PC-3 (cell line): ENCODE measurements at regions of chr3 and their contacts with region 1.

Region 1: DNA sequence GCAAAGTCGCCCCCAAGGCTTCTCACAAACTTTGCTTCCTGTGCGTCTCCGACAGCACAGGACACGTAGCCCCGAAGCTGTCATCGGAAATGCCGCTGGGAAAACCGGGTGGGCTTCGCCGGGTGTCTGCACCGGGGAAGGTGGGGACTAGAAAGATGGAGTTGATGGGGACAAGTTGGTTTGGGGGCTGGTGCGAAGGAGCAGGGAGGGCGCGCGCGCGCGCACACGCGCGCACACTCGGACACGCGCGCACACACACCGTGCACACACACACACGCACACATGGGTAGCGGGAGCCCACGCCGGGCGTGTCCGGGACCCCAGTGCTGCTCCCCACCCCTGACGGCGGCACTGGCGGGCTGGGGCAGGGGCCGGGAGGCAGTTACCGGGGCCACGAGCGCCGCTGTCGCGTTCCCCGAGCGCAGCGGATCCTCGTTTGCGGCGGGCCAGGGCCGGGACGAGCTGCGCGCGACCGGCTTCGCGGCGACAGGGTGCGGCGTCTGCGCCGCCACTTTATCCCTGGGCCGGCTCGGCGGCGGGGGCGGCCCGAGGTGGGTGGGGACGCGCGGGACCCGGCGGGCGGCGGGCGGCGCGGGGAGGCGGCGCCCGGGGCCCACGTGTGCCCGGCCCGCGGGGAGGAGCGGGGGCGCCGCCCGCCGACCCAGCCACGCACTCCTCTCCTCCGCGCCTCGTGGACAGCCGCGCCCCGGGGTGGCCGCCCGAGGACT is 547 bp upstream of the MGLL start:
- DNase-seq: peak; percentile 29
- ATAC-seq: peak; percentile 51
- H3K4me3 ChIP-seq: peak overlapping the region; percentile 80
- H3K27ac ChIP-seq: peak overlapping the region; percentile 76
- H3K4me1 ChIP-seq: peaks cover 50% of the 10 kb centered on the region
- H3K27me3 ChIP-seq: no peaks in the 10 kb centered on the region
- CTCF ChIP-seq: no peak

Region 2: DNA sequence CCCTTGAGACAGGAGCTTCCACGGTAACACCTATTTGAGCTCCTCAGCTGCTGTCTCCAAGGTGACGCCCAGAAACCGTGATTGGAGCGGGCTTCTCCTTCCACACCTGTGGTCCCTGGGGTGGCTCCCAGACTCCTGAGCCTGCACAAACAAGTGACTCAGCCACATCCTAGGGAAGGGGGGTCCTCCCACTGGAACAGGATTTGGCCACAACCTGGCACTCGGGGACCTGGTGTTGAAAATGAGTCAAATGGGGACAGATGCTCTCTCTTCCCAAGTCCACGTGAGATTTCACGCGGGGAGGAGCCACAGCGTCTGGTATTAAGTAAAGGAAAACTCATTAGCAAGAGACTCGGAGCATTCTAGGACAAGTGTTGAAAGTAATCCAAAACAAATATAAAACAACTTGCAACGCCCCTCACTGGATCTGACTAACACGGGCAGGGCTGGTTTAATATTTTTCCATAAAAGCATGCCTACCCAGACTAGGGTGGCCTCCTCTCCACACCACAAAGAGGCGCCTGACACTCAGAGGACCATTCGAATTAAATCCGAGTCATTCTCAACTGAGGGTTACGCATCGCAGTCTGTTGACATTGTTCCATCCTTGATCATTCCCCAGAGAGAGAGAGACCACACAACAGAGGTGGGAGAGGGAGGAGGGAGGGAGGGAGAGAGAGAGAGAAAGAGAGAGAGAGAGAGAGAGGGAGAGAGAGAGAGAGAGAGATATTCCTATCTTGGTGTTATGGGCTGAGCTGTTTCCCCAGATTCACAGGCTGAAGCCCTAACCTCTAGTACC is 74.9 kb before region 1 on chr3:
- CTCF ChIA-PET with region 1: interaction called, 3 read pairs
- POLR2A ChIA-PET with region 1: interaction called, 3 read pairs
- intact Hi-C with region 1: loop called (anchors 5 kb)
- DNase-seq: peak; percentile 92
- ATAC-seq: peak; percentile 73
- H3K4me3 ChIP-seq: peak overlapping the region; percentile 33; the same call in 1 of the 2 replicates
- H3K27ac ChIP-seq: peak overlapping the region; percentile 95
- H3K4me1 ChIP-seq: peaks cover 58% of the 10 kb centered on the region
- H3K27me3 ChIP-seq: no peaks in the 10 kb centered on the region
- CTCF ChIP-seq: peak; percentile 43

Region 3: DNA sequence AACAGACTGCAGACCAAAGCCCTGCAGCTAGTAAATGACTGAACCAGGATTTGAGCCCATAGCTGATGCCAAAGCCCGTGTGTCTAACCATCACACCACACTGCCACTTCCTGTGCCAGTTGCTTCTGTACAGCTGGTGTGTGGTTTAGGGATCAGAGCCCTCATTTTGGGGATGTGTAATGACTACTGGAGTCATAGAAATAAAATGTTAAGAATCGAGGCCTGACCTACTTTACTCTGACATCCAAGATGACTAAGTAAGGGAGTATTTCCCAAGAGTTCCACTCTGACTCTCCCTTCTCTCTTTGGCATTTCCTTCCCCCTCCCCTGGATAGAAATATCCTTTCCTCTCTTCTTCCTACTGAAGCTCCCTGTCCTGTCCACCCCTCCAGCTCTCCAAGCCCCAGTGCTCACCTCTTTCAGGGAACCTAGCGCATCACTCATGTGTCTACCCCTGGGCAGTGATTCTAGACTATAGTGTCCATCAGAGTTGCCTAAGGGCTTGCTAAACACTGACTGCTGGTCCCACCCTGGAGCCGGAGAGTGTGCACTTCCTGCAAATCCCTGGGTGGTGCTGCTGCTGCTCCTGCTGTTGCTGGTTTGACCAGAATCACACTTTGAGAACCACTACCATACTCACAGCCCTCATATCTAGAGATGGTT is 54.4 kb before region 1 on chr3:
- CTCF ChIA-PET with region 1: no interaction called
- POLR2A ChIA-PET with region 1: interaction called, 14 read pairs
- intact Hi-C with region 1: loop called (anchors 1 kb)
- DNase-seq: peak; percentile 95
- ATAC-seq: peak; percentile 91
- H3K4me3 ChIP-seq: no peak overlapping the region
- H3K27ac ChIP-seq: peak overlapping the region; percentile 88
- H3K4me1 ChIP-seq: peaks cover 28% of the 10 kb centered on the region
- H3K27me3 ChIP-seq: no peaks in the 10 kb centered on the region
- CTCF ChIP-seq: no peak

Region 4: DNA sequence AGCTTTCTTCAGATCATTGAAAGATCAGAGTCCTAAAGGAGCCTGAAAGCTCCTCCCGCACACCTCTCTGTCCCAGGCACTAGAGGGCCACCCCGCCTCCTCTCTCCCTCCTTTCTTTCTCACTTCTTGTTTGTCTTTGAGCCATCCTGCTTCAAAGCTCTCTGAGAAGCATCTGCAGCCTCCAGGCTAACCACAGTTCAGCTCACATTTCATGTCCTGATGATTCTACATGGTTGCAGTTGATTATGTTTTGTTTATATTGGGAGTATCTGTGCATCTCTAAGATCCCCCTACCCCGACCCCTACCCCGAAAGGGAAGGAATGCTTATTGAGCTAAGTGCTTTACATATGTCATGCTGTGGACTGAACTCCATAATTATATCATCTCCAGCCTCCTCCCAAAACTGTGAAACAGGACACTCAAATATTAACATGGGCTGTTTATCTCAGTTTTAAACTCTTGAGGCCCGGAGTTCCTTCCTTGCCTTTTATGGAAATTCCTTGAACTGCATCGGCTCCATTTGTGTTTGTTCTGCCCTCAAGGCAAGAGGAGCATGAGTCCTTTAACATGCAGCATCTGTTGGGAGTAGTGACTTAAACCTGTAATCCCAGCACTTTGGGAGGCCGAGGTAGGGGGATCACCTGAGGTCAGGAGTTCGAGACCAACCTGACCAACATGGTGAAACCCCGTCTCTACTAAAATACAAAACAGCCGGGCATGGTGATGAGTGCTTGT is 31.5 kb before region 1 on chr3:
- CTCF ChIA-PET with region 1: interaction called, 10 read pairs
- POLR2A ChIA-PET with region 1: no interaction called
- intact Hi-C with region 1: no loop called
- DNase-seq: peak; percentile 69
- ATAC-seq: peak; percentile 89
- H3K4me3 ChIP-seq: no peak overlapping the region
- H3K27ac ChIP-seq: peak overlapping the region; percentile 41
- H3K4me1 ChIP-seq: peaks cover 28% of the 10 kb centered on the region
- H3K27me3 ChIP-seq: no peaks in the 10 kb centered on the region
- CTCF ChIP-seq: peak; percentile 54

Region 5: DNA sequence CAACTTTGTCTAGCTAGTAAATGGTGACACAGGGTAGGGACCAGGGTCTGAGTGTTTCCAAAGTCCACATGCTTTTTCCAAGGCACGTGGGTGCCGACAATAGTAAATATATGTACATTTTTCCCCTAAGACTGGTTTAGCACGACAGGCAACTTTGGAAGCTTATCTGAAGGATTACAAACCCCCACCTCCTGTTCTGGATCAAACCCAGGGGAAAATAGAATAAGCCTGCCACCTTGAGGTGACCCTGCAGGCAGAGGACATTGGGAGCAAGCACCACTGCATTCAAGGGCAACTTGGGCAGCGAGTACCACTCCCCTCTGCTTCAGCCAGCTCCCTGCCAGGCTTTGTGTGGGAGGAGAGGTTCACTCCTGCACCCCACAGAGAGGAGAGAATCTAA is 137.0 kb after region 1 on chr3:
- CTCF ChIA-PET with region 1: no interaction called
- POLR2A ChIA-PET with region 1: no interaction called
- intact Hi-C with region 1: loop called (anchors 5 kb)
- DNase-seq: peak; percentile 62
- ATAC-seq: peak; percentile 32
- H3K4me3 ChIP-seq: no peak overlapping the region
- H3K27ac ChIP-seq: no peak overlapping the region
- H3K4me1 ChIP-seq: peaks cover 30% of the 10 kb centered on the region
- H3K27me3 ChIP-seq: no peaks in the 10 kb centered on the region
- CTCF ChIP-seq: peak; percentile 59